ENCODE measurements at regions of chr1 and their contacts with region 1.

Region 1: GRCh38 chr1:6359216-6360116 is 34.1 kb downstream of the ACOT7 start:
- DNase-seq: peak; percentile 71 to 83 (median 78)
- H3K4me3 ChIP-seq: no peak overlapping the region
- H3K27ac ChIP-seq: peak overlapping the region; percentile 35 to 79
- H3K4me1 ChIP-seq: peaks cover 15% of the 10 kb centered on the region
- H3K27me3 ChIP-seq: no peaks in the 10 kb centered on the region
- CTCF ChIP-seq: no peak
- EP300 ChIP-seq: no peak
- POLR2A ChIP-seq: peak; percentile 15

Region 2: DNA sequence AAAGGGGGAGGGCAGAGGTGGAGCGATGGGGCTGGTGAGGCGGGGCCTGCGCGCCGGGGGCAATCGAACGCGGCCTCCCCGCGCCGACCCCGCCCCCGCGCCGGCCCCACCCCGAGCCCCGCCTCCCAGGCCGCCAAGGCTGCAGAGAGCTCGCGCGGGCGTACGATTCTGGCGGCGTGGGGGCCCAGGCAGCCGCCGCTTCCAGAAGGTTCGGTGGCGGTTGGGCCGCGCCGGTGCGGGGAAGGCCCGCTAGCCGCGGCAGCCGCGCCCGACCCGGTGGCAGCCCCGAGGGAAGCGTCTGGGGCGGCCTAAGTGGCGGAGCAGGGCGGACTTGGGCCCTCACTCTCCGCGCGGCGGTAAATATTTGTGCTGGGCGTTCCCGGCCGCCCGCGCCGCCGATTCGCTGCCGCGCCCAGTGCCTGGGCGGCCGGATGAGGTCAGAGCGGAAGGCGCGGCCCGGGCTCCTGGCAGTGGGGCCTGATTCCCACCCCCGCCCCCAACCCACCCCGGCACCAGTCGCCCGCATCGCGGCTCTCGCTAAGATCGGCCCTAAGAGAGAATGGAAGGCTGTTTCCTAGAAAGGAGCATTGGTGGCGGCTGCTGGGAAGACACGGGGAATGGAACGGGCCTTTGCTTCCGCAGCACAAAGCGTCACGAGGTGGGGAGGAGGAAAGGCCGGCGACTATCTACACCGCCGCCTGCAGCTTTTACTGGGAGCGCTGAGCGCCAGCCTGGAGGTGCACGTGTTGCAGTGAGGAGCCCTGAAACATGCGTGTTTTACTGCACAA is 34.1 kb after region 1 on chr1 and contains the start of gene ACOT7:
- intact Hi-C with region 1: loop called in 1 of 4 experiments (anchors 5 kb)
- DNase-seq: peak; percentile 83 to 91 (median 88)
- H3K4me3 ChIP-seq: peak within 1 kb of the TSS; percentile 57
- H3K27ac ChIP-seq: peak within 1 kb of the TSS; percentile 86 to 100
- H3K4me1 ChIP-seq: peaks cover 8% of the 10 kb centered on the region
- H3K27me3 ChIP-seq: no peaks in the 10 kb centered on the region
- CTCF ChIP-seq: no peak
- EP300 ChIP-seq: no peak
- POLR2A ChIP-seq: peak; percentile 84
- total RNA-seq, gene ACOT7: 8.2 to 16.3 (median 11.3) TPM

Region 3: DNA sequence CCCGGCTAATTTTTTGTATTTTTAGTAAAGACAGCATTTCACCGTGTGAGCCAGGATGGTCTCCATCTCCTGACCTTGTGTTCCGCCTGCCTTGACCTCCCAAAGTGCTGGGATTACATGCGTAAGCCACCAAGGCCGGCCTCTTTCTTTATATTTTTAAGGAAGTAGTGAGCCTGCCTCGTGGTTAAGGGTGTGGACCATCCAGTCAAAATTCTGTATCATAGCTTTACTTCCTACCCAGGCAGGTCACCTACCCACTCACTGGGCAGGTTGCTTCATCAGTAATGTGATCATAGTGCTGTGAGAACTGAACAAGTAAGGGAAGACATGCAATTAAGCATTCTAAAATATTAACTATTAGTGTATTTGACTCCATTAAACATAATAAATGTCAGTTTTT is 42.2 kb after region 1 on chr1:
- intact Hi-C with region 1: loop called in 2 of 4 experiments (anchors 5 kb)
- DNase-seq: no peak
- H3K4me3 ChIP-seq: no peak overlapping the region
- H3K27ac ChIP-seq: no peak overlapping the region
- H3K4me1 ChIP-seq: no peaks in the 10 kb centered on the region
- H3K27me3 ChIP-seq: no peaks in the 10 kb centered on the region
- CTCF ChIP-seq: no peak
- EP300 ChIP-seq: no peak
- POLR2A ChIP-seq: no peak

Region 4: GRCh38 chr1:6414443-6414844 is 55.0 kb after region 1 on chr1:
- intact Hi-C with region 1: loop called in 1 of 4 experiments (anchors 10 kb)
- DNase-seq: no peak
- H3K4me3 ChIP-seq: no peak overlapping the region
- H3K27ac ChIP-seq: no peak overlapping the region
- H3K4me1 ChIP-seq: no peaks in the 10 kb centered on the region
- H3K27me3 ChIP-seq: no peaks in the 10 kb centered on the region
- CTCF ChIP-seq: no peak
- EP300 ChIP-seq: no peak
- POLR2A ChIP-seq: no peak